Heart left ventricle (tissue), 16 donors: ENCODE measurements at regions of chr18 and their contacts with region 1.

Region 1: GRCh38 chr18:36499938-36500337 is 202.4 kb downstream of the FHOD3 start:
- DNase-seq: no peak
- ATAC-seq: peak in 3 of 4 donors; percentile 5 to 37 (median 23)
- H3K4me3 ChIP-seq: no peak overlapping the region
- H3K27ac ChIP-seq: peak overlapping the region in 8 of 12 donors; percentile 3 to 55 (median 22)
- H3K4me1 ChIP-seq: peaks cover 0 to 60% (median 8%) of the 10 kb centered on the region in 12 donors
- H3K27me3 ChIP-seq: no peaks in the 10 kb centered on the region
- CTCF ChIP-seq: no peak
- POLR2A ChIP-seq: no peak

Region 2: DNA sequence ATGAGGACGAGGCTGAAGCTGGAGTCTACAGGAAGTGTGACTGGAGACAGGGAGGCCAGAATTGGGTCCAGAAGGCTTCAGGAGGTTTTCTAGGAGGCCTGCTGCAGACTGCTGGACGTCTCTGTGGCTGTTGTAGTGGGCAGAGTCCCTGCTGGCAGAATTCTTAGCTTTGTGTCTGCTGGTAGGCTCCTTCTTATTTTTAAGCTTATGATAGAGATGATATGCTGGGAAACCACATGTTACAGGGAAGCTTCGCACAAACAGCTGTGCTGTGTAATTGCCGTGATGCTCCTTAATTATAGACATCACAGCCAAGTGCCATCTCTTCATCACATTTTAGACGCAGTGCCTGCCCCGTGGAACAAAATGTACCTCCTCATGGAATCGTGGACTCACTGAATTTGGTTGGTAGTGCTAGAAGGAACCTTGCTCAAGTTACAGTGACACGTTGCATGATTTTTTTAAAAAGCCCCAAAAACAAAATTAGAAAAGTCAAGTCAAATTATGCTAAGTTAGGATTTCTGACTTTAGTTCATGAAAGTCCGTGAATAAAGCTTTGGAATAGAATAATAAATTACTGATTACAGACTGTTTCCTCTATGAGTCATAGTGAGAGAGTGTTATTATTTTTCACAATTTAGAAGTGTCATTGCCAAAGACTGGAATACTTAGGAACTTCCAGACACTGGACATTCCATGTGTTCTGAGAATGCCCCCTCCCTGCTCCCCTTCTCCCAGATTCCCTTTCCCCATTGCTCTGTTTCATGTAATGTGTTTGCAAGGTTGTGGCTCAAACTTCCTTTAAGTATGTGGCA is 58.3 kb before region 1 on chr18:
- intact Hi-C with region 1: loop called in 1 of 10 experiments (anchors 10 kb)
- DNase-seq: no peak
- ATAC-seq: peak; percentile 27 to 62 (median 36)
- H3K4me3 ChIP-seq: peak overlapping the region in 2 of 12 donors; percentile 1 to 8
- H3K27ac ChIP-seq: peak overlapping the region; percentile 24 to 77 (median 66)
- H3K4me1 ChIP-seq: peaks cover 3 to 69% (median 34%) of the 10 kb centered on the region in 12 donors
- H3K27me3 ChIP-seq: no peaks in the 10 kb centered on the region
- CTCF ChIP-seq: no peak
- POLR2A ChIP-seq: no peak